MCF 10A (cell line): ENCODE measurements at regions of chr20 and their contacts with region 1.

Region 1: DNA sequence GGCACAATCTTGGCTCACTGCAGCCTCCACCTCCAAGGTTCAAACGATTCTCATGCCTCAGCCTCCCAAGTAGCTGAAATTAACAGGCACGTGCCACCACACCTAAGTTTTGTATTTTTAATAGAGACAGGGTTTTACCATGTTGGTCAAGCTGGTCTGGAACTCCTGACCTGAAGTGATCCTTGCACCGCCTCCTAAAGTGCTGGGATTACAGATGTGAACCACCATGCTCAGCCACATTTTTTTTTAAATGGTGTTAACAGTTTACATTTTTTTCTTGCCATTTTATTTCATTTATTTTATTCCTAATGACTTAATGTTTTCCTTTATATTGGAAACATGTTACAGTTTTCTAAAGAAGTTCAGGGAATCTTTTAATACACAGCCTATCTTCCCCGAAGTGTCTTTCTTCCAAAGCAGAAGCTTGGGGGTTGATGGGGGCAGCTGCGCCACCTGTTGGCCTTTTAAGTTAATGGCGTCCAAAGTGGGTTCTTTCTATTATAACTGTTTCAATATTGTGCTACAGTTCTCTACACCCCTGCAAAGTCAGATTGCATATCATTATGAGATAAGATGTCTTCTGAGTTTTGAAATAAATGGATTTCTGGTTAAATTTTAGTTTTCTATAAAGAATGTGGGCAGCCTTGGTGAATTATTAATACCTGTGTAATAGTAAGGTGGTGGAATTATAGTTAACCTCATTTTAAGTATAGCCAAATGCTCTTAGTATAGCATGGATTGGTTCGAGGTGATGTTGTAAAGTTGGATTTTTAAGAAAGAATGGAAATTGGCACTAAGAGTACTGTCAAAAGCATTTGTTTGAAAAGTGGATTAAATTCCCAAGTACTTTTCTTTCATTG is 42.0 kb upstream of the PLCG1 start:
- DNase-seq: peak; percentile 63
- H3K4me3 Mint-ChIP-seq: no peak overlapping the region
- H3K27ac Mint-ChIP-seq: no peak overlapping the region
- H3K4me1 Mint-ChIP-seq: peaks cover 6% of the 10 kb centered on the region
- H3K27me3 Mint-ChIP-seq: no peaks in the 10 kb centered on the region
- CTCF ChIP-seq: peak; percentile 82

Region 2: DNA sequence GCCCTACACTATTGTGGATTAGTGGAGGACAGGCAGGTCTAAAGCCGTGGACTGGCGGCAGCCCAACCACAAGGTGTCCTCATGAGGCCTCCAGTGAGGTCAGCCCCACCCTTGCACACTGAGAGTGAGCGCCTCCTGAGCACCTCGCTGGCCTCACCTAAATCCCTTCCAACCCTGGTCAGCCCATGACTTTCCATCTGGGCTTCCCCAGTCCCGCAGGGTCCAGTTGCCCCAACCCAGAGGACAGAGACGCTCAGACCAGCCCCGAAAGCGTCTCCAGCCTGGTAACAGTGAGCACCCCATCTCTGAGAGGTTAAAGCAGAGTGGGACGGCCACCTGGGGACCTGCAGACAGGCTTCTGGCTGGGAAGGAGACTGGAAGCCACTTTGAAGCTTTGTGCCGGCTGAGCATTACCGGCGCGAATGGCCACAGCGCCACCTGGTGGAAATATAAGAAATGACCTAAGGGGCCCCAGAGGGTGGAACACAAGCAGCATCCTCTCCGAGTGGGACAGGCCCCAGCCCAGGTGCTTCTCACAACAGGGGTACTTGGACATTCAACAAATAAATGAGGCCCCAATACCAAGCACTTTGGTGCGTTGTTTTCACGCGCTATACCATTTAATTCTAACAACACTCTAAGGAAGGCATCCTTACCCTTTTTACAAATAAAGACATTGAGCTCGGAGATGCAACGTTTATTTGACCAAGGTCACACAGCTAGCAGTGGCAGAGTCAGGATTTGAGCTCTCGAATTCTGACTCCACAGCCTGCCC is 132.4 kb before region 1 on chr20:
- CTCF ChIA-PET with region 1: interaction called, 176 read pairs
- POLR2A ChIA-PET with region 1: interaction called, 15 read pairs
- intact Hi-C with region 1: loop called (anchors 1 kb)
- DNase-seq: peak; percentile 71
- H3K4me3 Mint-ChIP-seq: no peak overlapping the region
- H3K27ac Mint-ChIP-seq: no peak overlapping the region
- H3K4me1 Mint-ChIP-seq: peaks cover 20% of the 10 kb centered on the region
- H3K27me3 Mint-ChIP-seq: no peaks in the 10 kb centered on the region
- CTCF ChIP-seq: peak; percentile 84

Region 3: GRCh38 chr20:41003143-41003883 is 92.0 kb before region 1 on chr20:
- CTCF ChIA-PET with region 1: interaction called, 16 read pairs
- POLR2A ChIA-PET with region 1: interaction called, 3 read pairs
- intact Hi-C with region 1: no loop called
- DNase-seq: peak; percentile 99
- H3K4me3 Mint-ChIP-seq: peak overlapping the region; percentile 79
- H3K27ac Mint-ChIP-seq: peak overlapping the region; percentile 99
- H3K4me1 Mint-ChIP-seq: peaks cover 38% of the 10 kb centered on the region
- H3K27me3 Mint-ChIP-seq: no peaks in the 10 kb centered on the region
- CTCF ChIP-seq: no peak

Region 4: GRCh38 chr20:41047975-41048305 is 47.4 kb before region 1 on chr20:
- CTCF ChIA-PET with region 1: interaction called, 22 read pairs
- POLR2A ChIA-PET with region 1: no interaction called
- intact Hi-C with region 1: no loop called
- DNase-seq: peak; percentile 39
- H3K4me3 Mint-ChIP-seq: peak overlapping the region; percentile 73
- H3K27ac Mint-ChIP-seq: peak overlapping the region; percentile 5
- H3K4me1 Mint-ChIP-seq: peaks cover 66% of the 10 kb centered on the region
- H3K27me3 Mint-ChIP-seq: no peaks in the 10 kb centered on the region
- CTCF ChIP-seq: no peak

Region 5: DNA sequence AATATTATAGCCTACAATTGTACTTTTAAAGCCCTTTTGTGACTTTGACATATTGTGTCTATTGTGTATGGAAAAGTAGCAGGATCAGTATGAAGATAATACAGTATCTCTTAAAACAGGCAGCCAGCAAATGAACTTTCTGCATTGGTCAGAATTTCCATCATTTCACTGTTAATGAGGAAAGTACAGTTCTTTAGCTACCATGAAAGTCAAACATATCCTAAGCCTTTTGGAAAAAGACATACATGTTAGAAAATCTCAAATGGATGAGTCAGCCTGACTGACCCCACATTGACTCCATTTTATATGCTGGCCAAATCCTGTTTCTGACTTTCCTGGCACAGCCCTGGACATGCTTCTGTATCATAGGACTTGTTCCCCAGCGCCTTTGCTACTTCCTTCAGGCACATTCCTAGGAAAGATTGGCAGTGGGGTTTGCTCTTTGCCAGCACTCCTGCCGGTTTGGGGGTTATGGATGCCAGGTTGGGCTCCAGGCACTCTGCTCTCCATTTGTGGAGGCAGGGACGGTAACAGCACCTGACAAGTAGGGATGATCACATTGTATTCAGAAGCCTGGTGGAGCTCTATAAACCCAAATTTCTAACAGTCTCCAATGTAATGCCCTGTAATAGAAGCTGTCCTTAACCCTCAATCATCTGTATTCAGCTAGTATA is 23.0 kb before region 1 on chr20:
- CTCF ChIA-PET with region 1: interaction called, 10 read pairs
- POLR2A ChIA-PET with region 1: interaction called, 3 read pairs
- intact Hi-C with region 1: no loop called
- DNase-seq: peak; percentile 82
- H3K4me3 Mint-ChIP-seq: no peak overlapping the region
- H3K27ac Mint-ChIP-seq: peak overlapping the region; percentile 43
- H3K4me1 Mint-ChIP-seq: peaks cover 27% of the 10 kb centered on the region
- H3K27me3 Mint-ChIP-seq: no peaks in the 10 kb centered on the region
- CTCF ChIP-seq: no peak

Region 6: DNA sequence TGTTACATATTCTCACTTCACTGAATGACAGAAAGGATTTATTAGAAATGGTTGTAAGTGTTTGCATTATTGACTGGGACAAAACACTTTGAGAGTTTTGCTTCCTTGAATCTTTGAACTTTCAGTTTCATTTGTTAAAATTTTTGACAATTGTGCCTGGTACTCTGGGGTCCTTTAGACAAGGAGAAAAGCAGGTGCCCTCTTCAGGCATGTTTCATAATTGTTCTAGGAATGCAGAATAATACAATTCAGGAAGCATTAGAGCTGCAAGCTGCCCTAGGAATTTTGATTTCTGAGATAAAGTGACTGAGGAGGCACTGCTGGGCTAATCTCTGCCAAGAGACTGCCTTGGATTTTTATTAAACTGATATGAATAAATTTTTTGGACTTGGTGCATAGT is 17.0 kb before region 1 on chr20:
- CTCF ChIA-PET with region 1: interaction called, 56 read pairs
- POLR2A ChIA-PET with region 1: interaction called, 4 read pairs
- intact Hi-C with region 1: no loop called
- DNase-seq: peak; percentile 50
- H3K4me3 Mint-ChIP-seq: no peak overlapping the region
- H3K27ac Mint-ChIP-seq: peak overlapping the region; percentile 24
- H3K4me1 Mint-ChIP-seq: peaks cover 22% of the 10 kb centered on the region
- H3K27me3 Mint-ChIP-seq: no peaks in the 10 kb centered on the region
- CTCF ChIP-seq: peak; percentile 32

Region 7: DNA sequence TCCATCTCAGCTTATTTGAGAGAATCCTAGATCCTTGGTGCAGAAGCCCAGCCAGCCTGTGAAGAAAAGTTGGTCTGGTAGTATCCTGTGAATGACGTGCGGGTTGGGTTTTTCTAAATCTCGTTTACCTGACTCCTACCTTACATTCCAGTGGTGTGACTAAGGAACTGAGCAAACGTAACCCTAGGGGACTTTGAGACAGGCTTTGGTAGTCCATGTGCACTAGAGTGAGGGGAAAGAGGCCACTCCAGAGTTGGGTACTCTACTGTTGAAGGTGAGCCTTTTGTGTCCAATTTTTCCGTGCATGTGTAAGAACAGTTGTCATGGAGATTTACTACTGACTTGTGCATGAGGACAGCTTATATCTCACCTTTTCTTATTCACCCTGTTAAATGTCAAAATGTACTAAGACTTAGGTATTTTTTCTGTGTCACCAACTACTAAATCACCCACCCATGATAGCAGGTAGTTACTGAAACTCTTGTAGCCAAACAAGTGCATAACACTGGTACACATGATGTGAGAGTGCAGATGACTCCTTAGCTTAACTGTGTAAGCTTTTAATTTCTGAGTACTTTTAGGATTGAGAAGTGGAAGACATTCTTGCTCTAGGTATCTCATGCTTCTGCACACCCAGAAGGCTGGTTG is 15.7 kb after region 1 on chr20:
- CTCF ChIA-PET with region 1: interaction called, 28 read pairs
- POLR2A ChIA-PET with region 1: interaction called, 4 read pairs
- intact Hi-C with region 1: no loop called
- DNase-seq: no peak
- H3K4me3 Mint-ChIP-seq: no peak overlapping the region
- H3K27ac Mint-ChIP-seq: no peak overlapping the region
- H3K4me1 Mint-ChIP-seq: peaks cover 5% of the 10 kb centered on the region
- H3K27me3 Mint-ChIP-seq: no peaks in the 10 kb centered on the region
- CTCF ChIP-seq: no peak

Region 8: DNA sequence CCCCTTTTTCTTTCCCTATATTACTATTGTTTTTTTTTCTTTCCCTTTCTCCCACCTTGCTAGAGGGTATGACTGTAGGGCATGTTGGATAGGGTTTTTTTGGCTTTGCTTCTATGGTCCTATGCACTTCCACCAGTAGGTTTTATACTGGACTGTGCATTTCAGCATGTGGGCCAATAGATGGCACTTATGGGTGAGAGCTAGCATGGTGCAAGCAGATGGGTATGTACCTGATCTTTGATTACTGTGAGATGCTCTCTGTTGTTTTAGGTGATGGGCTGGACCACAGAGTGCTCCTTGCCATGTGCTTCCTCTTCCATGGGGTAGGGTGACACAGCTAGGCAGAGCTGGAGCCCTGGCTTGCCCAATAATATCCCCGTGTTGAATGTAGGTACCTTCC is 651.3 kb after region 1 on chr20:
- CTCF ChIA-PET with region 1: no interaction called
- POLR2A ChIA-PET with region 1: no interaction called
- intact Hi-C with region 1: no loop called
- DNase-seq: no peak
- H3K4me3 Mint-ChIP-seq: no peak overlapping the region
- H3K27ac Mint-ChIP-seq: no peak overlapping the region
- H3K4me1 Mint-ChIP-seq: no peaks in the 10 kb centered on the region
- H3K27me3 Mint-ChIP-seq: peaks cover 16% of the 10 kb centered on the region
- CTCF ChIP-seq: no peak